Gastrocnemius medialis (tissue), 4 donors: ENCODE measurements at regions of chr7 and their contacts with region 1.

Region 1: DNA sequence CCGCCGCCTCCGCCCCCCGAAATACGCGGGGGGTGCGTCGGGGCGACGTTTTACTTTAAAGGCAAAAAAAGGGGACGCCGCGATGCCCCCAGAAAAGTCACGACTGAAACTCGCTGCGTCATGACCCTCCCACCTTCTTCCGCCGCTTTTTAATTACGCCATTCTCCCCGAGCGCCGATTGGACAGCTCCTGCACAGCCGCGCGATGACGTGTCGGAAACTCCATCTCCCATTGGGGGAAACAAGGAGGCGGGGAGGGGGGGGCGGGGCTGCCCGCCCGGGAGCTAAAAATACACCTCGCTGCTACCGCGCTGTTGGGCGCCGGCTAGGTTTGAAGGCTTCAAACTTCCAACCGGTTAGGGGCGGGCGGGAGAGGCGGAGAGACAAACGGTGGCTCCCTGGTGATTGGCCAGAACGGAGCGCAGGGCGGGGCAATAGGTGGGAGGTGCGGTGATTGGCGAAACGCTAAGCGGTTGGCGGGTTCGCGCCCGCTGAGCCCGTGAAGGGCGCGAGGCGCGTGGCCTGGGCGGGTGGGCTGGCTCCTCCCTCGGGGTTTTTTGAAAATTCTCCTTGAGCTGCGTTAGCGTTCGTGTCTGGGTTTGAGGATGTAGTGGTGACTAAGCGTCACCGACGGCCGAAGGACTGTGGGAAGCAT is at the start of gene RHEB:
- DNase-seq: peak; percentile 99
- ATAC-seq: peak; percentile 79 to 82
- H3K4me3 ChIP-seq: peak within 1 kb of the TSS; percentile 67 to 81 (median 72)
- H3K27ac ChIP-seq: peak within 1 kb of the TSS; percentile 85 to 98 (median 89)
- H3K4me1 ChIP-seq: peaks cover 20 to 38% of the 10 kb centered on the region in 2 donors
- H3K27me3 ChIP-seq: no peaks in the 10 kb centered on the region
- CTCF ChIP-seq: no peak
- POLR2A ChIP-seq: peak; percentile 56 to 61
- total RNA-seq, gene RHEB: 93.2 to 159 (median 124) TPM

Region 2: DNA sequence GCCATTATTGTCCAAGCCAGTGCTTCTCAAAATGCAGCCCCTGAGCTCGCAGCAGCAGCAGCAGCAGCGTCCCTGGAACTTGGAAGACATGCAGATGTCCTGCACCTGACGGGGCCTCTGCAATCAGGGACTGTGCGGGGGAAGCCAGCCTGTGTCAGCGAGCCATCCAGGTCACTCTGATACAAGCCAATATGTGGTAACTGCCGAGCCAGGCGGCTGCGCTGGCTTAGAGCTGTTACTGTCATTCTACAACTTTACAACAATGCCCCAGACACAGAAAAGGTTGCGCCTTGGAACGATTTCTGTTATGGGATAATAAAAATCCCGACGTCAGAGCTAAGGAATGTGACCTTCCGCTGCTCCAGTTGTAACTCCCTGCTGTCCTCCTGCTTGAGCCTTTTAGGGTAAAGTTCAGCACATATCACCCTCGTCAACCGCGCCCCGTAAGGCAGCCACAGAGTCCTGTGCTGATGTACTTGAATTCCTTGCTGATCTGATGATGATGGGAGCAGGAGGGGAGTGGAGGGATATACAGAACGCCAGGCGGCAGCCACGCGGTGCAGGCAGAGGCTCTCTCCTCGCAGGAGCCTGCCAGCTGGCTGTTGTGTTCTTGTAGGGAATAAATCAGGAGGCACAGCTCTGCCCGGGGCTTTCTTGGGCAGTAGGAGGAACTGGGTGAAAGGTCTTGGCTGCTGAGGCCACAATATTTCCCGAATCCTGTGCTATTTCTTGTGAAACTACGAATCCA is 60.0 kb before region 1 on chr7:
- in situ Hi-C with region 1: loop called in 1 of 4 experiments (anchors 10 kb)
- intact Hi-C with region 1: loop called (anchors 1 kb)
- DNase-seq: peak; percentile 87 to 91
- ATAC-seq: peak; percentile 83 to 84
- H3K4me3 ChIP-seq: peak overlapping the region; percentile 32 to 47 (median 36)
- H3K27ac ChIP-seq: peak overlapping the region; percentile 91 to 94 (median 92)
- H3K4me1 ChIP-seq: peaks cover 23 to 46% of the 10 kb centered on the region in 2 donors
- H3K27me3 ChIP-seq: no peaks in the 10 kb centered on the region
- CTCF ChIP-seq: peak in 2 of 5 experiments; percentile 25 to 45
- POLR2A ChIP-seq: peak; percentile 13 to 42

Region 3: GRCh38 chr7:151503902-151504714 is 15.8 kb before region 1 on chr7:
- in situ Hi-C with region 1: no loop called
- intact Hi-C with region 1: loop called (anchors 2 kb)
- DNase-seq: peak; percentile 78 to 80
- ATAC-seq: peak; percentile 89 to 93
- H3K4me3 ChIP-seq: no peak overlapping the region
- H3K27ac ChIP-seq: peak overlapping the region; percentile 77 to 98 (median 88)
- H3K4me1 ChIP-seq: peaks cover 84 to 89% of the 10 kb centered on the region in 2 donors
- H3K27me3 ChIP-seq: no peaks in the 10 kb centered on the region
- CTCF ChIP-seq: no peak
- POLR2A ChIP-seq: peak in 1 of 2 donors; percentile 59

Region 4: DNA sequence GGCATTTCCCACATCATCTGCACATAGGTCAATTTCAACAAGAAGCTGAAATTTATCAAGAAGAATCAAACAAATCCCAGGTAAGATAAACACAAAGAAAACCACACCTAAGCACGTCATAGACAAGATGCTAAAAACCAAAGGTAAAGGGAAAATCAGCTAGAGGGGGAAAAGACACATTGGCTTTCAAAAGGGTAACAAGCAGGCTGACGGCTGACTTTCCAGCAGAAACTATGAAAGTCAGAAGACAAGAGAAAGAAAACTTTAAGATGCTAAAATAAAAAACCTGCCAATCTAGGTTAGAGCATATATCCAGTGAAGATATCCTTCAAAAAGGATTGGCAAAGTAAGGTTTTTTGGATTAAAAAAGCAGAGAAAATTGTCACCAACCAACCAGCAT is 59.8 kb after region 1 on chr7:
- in situ Hi-C with region 1: no loop called
- intact Hi-C with region 1: no loop called
- DNase-seq: no peak
- ATAC-seq: no peak
- H3K4me3 ChIP-seq: no peak overlapping the region
- H3K27ac ChIP-seq: no peak overlapping the region
- H3K4me1 ChIP-seq: no peaks in the 10 kb centered on the region
- H3K27me3 ChIP-seq: no peaks in the 10 kb centered on the region
- CTCF ChIP-seq: no peak
- POLR2A ChIP-seq: no peak

Region 5: DNA sequence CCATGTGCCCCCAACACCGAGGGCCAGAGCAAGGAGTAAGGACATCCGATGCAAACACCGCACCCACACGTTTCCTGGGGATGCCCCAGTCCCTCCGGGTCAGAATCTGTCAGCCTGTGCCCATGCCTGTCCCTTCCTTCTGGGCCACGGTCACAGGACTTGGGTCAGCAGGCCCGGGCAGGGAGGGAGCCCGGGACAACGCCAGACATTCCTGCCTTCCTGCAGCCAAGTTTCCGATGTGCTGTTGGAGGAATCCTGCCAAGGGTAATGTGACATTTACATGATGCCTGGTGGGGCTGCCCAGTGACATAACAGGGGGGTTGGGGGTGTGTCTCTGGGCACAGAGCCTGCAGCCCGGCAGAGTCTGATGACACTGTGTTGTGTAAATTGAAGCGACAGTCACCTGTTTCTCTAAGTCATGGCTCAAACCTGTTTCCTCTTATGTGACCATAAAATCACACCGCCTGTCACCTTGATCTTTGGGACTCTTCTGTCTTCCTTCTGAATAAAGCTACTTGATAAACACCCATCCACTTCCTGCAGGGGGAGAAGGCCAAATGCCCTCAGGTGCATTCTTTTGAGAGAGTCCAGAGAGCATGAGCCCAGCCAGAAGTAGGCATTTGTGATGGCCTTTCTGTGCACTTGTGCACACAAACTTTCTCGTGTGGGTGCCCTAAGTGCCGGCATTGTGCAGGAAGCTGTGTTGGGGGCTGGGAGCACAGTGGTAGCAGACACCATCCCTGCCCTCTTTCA is 175.1 kb after region 1 on chr7:
- in situ Hi-C with region 1: no loop called
- intact Hi-C with region 1: loop called (anchors 5 kb)
- DNase-seq: peak; percentile 94 to 98
- ATAC-seq: peak; percentile 90 to 93
- H3K4me3 ChIP-seq: no peak overlapping the region
- H3K27ac ChIP-seq: peak overlapping the region; percentile 80 to 93 (median 91)
- H3K4me1 ChIP-seq: peaks cover 16 to 19% of the 10 kb centered on the region in 2 donors
- H3K27me3 ChIP-seq: no peaks in the 10 kb centered on the region
- CTCF ChIP-seq: peak in 3 of 5 experiments; percentile 7 to 59 (median 30)
- POLR2A ChIP-seq: peak; percentile 4 to 52

Region 6: GRCh38 chr7:151736403-151736909 is 216.6 kb after region 1 on chr7:
- in situ Hi-C with region 1: no loop called
- intact Hi-C with region 1: loop called (anchors 5 kb)
- DNase-seq: peak; percentile 88 to 95
- ATAC-seq: peak; percentile 94
- H3K4me3 ChIP-seq: peak overlapping the region; percentile 43 to 48 (median 48)
- H3K27ac ChIP-seq: peak overlapping the region; percentile 74 to 91 (median 88)
- H3K4me1 ChIP-seq: peaks cover 16 to 18% of the 10 kb centered on the region in 2 donors
- H3K27me3 ChIP-seq: no peaks in the 10 kb centered on the region
- CTCF ChIP-seq: peak in 3 of 5 experiments; percentile 25 to 51 (median 41)
- POLR2A ChIP-seq: peak; percentile 74 to 85